HCT116 (cell line): ENCODE measurements at regions of chr11 and their contacts with region 1.

Region 1: DNA sequence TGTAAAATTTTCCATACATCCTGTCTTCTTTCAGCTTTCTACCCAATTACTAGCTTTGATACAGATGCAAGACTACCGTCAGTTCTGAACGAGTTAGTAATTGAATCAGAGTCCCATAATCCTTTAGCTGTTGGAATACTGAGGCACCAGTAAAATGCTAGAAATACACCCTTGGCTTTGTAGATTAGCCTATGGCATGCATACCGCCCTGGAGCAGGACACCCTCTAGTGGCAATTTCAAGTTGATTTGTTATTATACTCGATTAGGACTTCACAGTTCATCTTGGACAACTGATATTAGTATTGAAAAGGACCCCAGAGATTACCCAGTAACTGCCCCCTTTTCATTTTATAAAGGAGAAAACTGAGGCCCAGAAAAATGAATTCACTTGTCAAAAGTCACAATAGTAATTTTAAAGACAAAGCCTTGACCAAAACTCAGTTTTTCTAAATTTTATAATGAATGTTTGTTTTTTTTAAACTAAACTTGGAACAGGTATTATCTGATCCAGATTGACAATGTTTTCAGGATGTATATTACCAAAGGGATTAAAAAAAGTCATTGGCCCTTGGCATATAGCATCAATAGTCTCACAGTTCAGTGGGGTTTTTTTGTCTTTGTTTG is 72.6 kb downstream of the HIPK3 start:
- DNase-seq: peak; percentile 48
- ATAC-seq: peak; percentile 90
- H3K4me3 ChIP-seq: no peak overlapping the region
- H3K27ac ChIP-seq: no peak overlapping the region
- H3K4me1 ChIP-seq: 0 out of 4 replicates have a peak, but pooled peaks cover 0 to 2% of the 10 kb centered on the region in 2 experiments
- H3K27me3 ChIP-seq: no peaks in the 10 kb centered on the region
- CTCF ChIP-seq: peak; percentile 60 to 77 (median 62); a peak in 5 of 6 replicates
- POLR2A ChIP-seq: no peak
- RAD21 ChIP-seq: peak; percentile 80

Region 2: DNA sequence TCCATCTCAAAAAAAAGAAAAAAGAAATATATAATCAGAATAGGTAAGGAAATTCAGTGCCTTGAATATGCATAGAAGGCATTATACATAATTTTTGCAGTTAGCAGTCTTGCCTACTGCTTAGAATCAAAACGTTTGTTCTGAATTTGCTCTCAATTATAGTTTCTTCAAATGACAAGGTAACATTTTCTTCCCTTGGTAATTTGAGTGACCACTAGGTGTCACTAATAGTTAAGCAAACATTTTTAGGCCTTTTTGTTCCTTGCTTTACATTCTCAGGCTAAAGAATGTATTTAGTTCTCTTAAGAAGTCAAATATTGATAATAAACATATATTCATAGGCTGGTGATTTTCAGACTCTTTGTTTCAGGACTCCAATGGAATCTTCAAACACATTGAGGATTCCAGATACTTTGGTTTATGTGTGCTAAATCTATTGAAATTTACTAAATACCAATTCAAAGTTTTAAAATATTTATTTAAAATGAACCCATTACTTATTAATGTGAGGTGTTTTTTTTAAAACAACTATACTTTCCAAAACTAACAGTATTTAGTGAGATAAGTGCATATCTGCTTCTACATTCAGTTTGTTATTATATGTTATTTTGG is 369.2 kb before region 1 on chr11:
- CTCF ChIA-PET with region 1: no interaction called
- POLR2A ChIA-PET with region 1: no interaction called
- RAD21 ChIA-PET with region 1: no interaction called
- intact Hi-C with region 1: loop called (anchors 10 kb)
- DNase-seq: peak; percentile 28
- ATAC-seq: no peak
- H3K4me3 ChIP-seq: no peak overlapping the region
- H3K27ac ChIP-seq: no peak overlapping the region
- H3K4me1 ChIP-seq: no peaks in the 10 kb centered on the region
- H3K27me3 ChIP-seq: no peaks in the 10 kb centered on the region
- CTCF ChIP-seq: peak; percentile 49 to 72 (median 64)
- POLR2A ChIP-seq: no peak
- RAD21 ChIP-seq: peak; percentile 82